Right cardiac atrium (tissue), 5 donors: ENCODE measurements at regions of chr14 and their contacts with region 1.

Region 1: GRCh38 chr14:75497191-75497590 is 25.1 kb upstream of the BATF start:
- DNase-seq: no peak
- ATAC-seq: no peak
- H3K4me3 ChIP-seq: no peak overlapping the region
- H3K27ac ChIP-seq: no peak overlapping the region
- H3K4me1 ChIP-seq: no peaks in the 10 kb centered on the region
- H3K27me3 ChIP-seq: no peaks in the 10 kb centered on the region

Region 2: GRCh38 chr14:75132382-75133086 is 364.7 kb before region 1 on chr14:
- intact Hi-C with region 1: loop called in 1 of 4 experiments (anchors 10 kb)
- DNase-seq: no peak
- ATAC-seq: peak; percentile 68 to 78
- H3K4me3 ChIP-seq: no peak overlapping the region
- H3K27ac ChIP-seq: no peak overlapping the region
- H3K4me1 ChIP-seq: peaks cover 2% of the 10 kb centered on the region
- H3K27me3 ChIP-seq: no peaks in the 10 kb centered on the region

Region 3: GRCh38 chr14:75278422-75279161 is 218.6 kb before region 1 on chr14 and contains the start of gene FOS:
- intact Hi-C with region 1: no loop called
- DNase-seq: peak; percentile 94 to 97 (median 95)
- ATAC-seq: peak; percentile 84 to 90
- H3K4me3 ChIP-seq: peak within 1 kb of the TSS; percentile 74
- H3K27ac ChIP-seq: peak within 1 kb of the TSS; percentile 95
- H3K4me1 ChIP-seq: peaks cover 4% of the 10 kb centered on the region
- H3K27me3 ChIP-seq: no peaks in the 10 kb centered on the region
- total RNA-seq, gene FOS: 15.7 to 244 (median 46.3) TPM